Dorsolateral prefrontal cortex (tissue), 120 donors: ENCODE measurements at regions of chr1 and their contacts with region 1.

Region 1: GRCh38 chr1:230858918-230859729 is 9.2 kb downstream of the C1orf198 start:
- DNase-seq: peak; percentile 37 to 94 (median 88)
- H3K4me3 ChIP-seq: peak overlapping the region in 25 of 59 donors; percentile 0 to 40 (median 13)
- H3K27ac ChIP-seq: peak overlapping the region; percentile 58 to 97 (median 93)
- H3K27me3 ChIP-seq: no peaks in the 10 kb centered on the region
- CTCF ChIP-seq: peak in 6 of 56 donors; percentile 1 to 18 (median 12)

Region 2: DNA sequence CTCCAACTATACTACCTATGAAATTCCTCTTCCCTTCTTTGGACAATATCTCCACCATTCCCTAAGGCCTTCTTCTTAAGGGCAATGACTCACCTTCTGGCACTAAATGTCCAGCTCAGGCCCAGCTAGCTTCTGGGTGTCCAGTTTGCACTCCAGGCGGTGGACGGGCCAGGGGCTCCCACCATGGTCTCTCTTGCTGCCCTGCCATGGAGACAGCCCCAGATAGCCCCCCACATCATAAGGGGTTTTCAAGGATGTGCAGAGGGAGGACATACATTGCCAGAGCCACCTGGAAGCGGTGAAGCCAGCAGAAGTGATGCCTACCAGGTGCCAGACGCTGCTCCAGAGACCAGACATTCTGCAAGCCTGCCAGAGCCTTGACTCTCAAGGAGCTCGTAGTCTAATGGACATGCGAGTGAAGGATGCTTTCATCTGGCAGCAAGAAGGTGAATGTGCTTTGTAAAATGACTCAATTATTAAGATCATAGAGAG is 34.5 kb before region 1 on chr1:
- intact Hi-C with region 1: loop called (anchors 1 to 5 kb)
- DNase-seq: no peak
- H3K4me3 ChIP-seq: no peak overlapping the region
- H3K27ac ChIP-seq: peak overlapping the region; percentile 65 to 98 (median 92)
- H3K27me3 ChIP-seq: no peaks in the 10 kb centered on the region
- CTCF ChIP-seq: no peak

Region 3: GRCh38 chr1:231020139-231020601 is 161.0 kb after region 1 on chr1:
- intact Hi-C with region 1: no loop called
- DNase-seq: no peak
- H3K4me3 ChIP-seq: no peak overlapping the region
- H3K27ac ChIP-seq: peak overlapping the region in 2 of 59 donors; percentile 37 to 57
- H3K27me3 ChIP-seq: no peaks in the 10 kb centered on the region
- CTCF ChIP-seq: no peak